AG04450 (cell line): ENCODE measurements at regions of chr1 and their contacts with region 1.

Region 1: GRCh38 chr1:9784508-9785133 is 39.1 kb downstream of the CLSTN1 start:
- DNase-seq: peak; percentile 33
- H3K4me3 ChIP-seq: no peak overlapping the region
- H3K27ac ChIP-seq: no peak overlapping the region
- H3K27me3 ChIP-seq: no peaks in the 10 kb centered on the region
- CTCF ChIP-seq: peak; percentile 71

Region 2: GRCh38 chr1:9753121-9753531 is 31.5 kb before region 1 on chr1:
- CTCF ChIA-PET with region 1: no interaction called
- POLR2A ChIA-PET with region 1: no interaction called
- DNase-seq: peak; percentile 63
- H3K4me3 ChIP-seq: no peak overlapping the region
- H3K27ac ChIP-seq: no peak overlapping the region
- H3K27me3 ChIP-seq: no peaks in the 10 kb centered on the region
- CTCF ChIP-seq: no peak

Region 3: GRCh38 chr1:9823943-9824701 is 39.5 kb after region 1 on chr1 and contains the start of gene CLSTN1:
- CTCF ChIA-PET with region 1: interaction called, 11 read pairs
- POLR2A ChIA-PET with region 1: no interaction called
- DNase-seq: peak; percentile 42
- H3K4me3 ChIP-seq: peak within 1 kb of the TSS; percentile 97
- H3K27ac ChIP-seq: peak within 1 kb of the TSS; percentile 31
- H3K27me3 ChIP-seq: no peaks in the 10 kb centered on the region
- CTCF ChIP-seq: no peak
- polyA plus RNA-seq, gene CLSTN1: 35.2 and 57.8 TPM in 2 replicates

Region 4: DNA sequence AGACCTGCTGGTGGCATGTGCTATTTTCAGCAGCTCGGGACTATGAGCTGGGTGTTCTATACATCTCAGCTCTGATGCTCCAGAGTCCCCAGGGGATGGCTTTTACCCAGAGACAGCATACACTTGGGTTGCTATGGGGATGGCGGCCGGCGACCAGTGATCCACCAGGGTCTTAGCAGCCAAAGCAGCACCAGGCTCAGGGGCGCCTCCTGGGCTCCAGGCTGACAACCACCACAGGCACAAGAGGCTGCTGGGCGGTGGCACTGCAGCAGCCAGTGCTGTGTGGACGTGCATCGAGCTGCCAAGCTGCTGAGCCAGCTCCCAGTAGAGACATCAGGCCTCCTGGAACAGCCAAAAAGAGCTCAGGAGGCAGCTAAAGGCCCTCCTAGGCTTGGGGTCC is 76.7 kb after region 1 on chr1:
- CTCF ChIA-PET with region 1: interaction called, 21 read pairs
- POLR2A ChIA-PET with region 1: no interaction called
- DNase-seq: no peak
- H3K4me3 ChIP-seq: no peak overlapping the region
- H3K27ac ChIP-seq: no peak overlapping the region
- H3K27me3 ChIP-seq: no peaks in the 10 kb centered on the region
- CTCF ChIP-seq: no peak

Region 5: GRCh38 chr1:9867408-9868243 is 83.0 kb after region 1 on chr1:
- CTCF ChIA-PET with region 1: interaction called, 29 read pairs
- POLR2A ChIA-PET with region 1: no interaction called
- DNase-seq: peak; percentile 21
- H3K4me3 ChIP-seq: no peak overlapping the region
- H3K27ac ChIP-seq: no peak overlapping the region
- H3K27me3 ChIP-seq: no peaks in the 10 kb centered on the region
- CTCF ChIP-seq: peak; percentile 95

Region 6: DNA sequence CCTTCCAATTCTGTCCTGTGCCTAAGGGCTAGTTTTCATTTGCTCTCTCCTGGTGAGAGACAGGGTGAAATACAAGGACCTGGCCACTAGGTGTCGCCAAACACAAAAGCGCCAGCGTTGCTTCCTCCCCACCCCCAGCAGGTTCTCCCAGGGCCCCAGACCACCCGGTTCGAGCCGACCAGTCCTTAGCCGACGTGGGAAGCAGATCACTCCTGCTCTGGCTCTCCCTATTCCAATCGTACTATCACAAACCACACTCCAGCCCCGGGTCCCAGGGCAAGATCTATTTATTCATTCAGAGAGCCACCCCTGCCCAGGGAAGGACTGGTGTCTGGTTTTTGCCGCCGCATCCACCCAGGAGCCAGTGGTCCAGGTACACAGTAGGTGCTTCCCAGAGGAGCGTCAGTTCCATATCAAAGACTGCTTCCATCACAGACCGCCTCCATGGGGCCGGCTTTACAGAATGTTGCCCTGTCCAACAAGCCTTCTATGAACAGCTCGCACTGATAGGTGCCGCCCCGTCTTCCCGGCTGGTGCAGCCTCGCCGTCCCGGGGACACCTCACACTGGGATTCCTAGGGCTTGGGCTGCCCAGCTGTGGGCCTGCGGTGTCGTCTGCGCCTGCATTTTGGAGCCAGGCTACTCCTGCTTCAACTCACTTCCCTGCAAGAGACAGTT is 90.5 kb after region 1 on chr1:
- CTCF ChIA-PET with region 1: interaction called, 12 read pairs
- POLR2A ChIA-PET with region 1: no interaction called
- DNase-seq: peak; percentile 44
- H3K4me3 ChIP-seq: peak overlapping the region; percentile 7; the same call in 1 of the 2 replicates
- H3K27ac ChIP-seq: no peak overlapping the region
- H3K27me3 ChIP-seq: no peaks in the 10 kb centered on the region
- CTCF ChIP-seq: peak; percentile 95

Region 7: DNA sequence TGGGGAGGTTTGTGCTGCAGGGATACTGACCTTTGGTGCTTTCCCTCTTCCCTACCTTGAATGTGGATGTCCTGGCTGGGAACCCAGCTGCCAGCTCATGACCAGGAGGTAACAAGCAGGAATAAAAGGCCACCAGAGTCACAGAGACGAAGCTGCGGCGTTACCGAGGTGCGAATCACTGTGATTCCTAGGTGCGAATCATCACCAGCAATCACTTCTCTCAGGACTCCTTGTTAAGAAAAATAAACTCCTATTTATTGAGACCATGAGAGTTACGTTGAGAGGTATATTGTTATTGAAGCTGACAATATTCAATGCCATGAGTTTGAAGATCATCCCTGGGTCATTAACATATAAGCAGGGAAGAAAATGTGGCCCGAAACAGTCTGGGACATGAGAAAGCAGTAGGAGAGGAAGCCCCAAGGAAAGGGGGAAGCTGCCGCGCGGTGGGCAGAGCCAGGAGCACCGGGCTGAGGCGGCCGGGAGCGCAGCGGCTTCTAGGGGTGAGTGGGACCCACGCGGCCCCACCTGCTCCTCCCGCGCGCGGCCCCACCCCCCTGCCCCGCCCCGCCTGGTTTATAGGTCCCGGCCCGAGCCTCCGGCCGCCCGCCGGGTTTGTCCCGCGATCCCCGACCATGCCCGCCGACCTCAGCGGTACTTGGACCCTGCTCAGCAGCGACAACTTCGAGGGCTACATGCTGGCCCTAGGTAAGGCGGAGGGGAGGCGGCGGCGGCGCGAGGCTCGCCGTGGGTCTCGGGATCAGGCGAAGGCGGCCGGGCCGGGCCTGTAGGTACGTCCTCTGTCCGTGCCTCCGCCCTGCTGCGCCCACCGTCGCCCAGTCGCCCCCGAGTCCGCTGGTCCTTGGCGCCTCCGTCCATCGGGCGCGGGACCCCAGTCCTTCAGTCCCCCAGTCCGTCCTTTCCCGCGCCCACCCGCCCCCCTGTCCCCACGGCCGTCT is 212.3 kb after region 1 on chr1 and contains the start of gene RBP7:
- CTCF ChIA-PET with region 1: no interaction called
- POLR2A ChIA-PET with region 1: no interaction called
- DNase-seq: no peak
- H3K4me3 ChIP-seq: peak within 1 kb of the TSS; percentile 34
- H3K27ac ChIP-seq: no peak within 1 kb of the TSS
- H3K27me3 ChIP-seq: peaks cover 22% of the 10 kb centered on the region
- CTCF ChIP-seq: no peak
- polyA plus RNA-seq, gene RBP7: 0.20 and 0.22 TPM in 2 replicates